CD8-positive, alpha-beta T cell (primary cell): ENCODE measurements at regions of chr13 and their contacts with region 1.

Region 1: DNA sequence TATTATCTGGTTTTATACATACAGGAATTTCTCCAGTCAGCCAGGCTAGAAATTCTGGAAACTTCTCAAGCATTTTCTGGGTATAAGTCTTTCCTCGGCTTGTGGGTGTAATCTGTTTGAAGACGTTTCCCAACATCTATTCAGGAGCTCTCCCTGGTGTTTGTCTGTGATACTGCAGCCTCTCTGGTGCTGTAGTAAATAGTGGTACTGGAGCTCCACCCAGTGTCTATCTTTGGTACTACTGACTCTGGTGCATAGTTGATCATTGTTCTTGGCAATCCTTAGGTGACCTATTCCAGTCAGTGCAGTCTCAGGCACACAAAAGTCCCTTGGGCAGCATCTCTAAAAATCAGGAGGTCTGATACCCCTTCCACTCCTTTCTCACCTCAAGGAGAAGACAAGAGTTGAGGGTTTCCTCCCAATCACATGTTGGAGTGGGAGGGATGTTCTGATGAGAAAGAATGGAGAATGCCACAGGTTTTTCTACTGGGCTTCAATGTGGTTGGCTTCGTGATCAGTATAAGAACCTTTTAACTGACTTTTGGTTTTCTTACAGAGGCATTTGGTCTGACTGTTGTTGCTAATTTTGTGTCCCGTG is 115.5 kb downstream of the CYSLTR2 start:
- DNase-seq: peak; percentile 68 to 89 (median 82)
- ATAC-seq: peak; percentile 100
- H3K4me3 ChIP-seq: no peak overlapping the region
- H3K4me3 Mint-ChIP-seq: no peak overlapping the region
- H3K27ac ChIP-seq: no peak overlapping the region
- H3K27ac Mint-ChIP-seq: no peak overlapping the region
- H3K4me1 ChIP-seq: no peaks in the 10 kb centered on the region
- H3K4me1 Mint-ChIP-seq: peaks cover 3% of the 10 kb centered on the region
- H3K27me3 ChIP-seq: no peaks in the 10 kb centered on the region
- H3K27me3 Mint-ChIP-seq: peaks cover 4% of the 10 kb centered on the region
- CTCF ChIP-seq: peak; percentile 98

Region 2: GRCh38 chr13:46831588-46832194 is 1937.5 kb before region 1 on chr13:
- CTCF ChIA-PET with region 1: interaction called, 5 read pairs
- POLR2A ChIA-PET with region 1: no interaction called
- intact Hi-C with region 1: loop called in 1 of 2 experiments (anchors 5 kb)
- DNase-seq: peak in 4 of 9 experiments; percentile 18 to 52 (median 34)
- ATAC-seq: no peak
- H3K4me3 ChIP-seq: no peak overlapping the region
- H3K4me3 Mint-ChIP-seq: no peak overlapping the region
- H3K27ac ChIP-seq: no peak overlapping the region
- H3K27ac Mint-ChIP-seq: no peak overlapping the region
- H3K4me1 ChIP-seq: no peaks in the 10 kb centered on the region
- H3K4me1 Mint-ChIP-seq: no peaks in the 10 kb centered on the region
- H3K27me3 ChIP-seq: no peaks in the 10 kb centered on the region
- H3K27me3 Mint-ChIP-seq: no peaks in the 10 kb centered on the region
- CTCF ChIP-seq: peak; percentile 75

Region 3: DNA sequence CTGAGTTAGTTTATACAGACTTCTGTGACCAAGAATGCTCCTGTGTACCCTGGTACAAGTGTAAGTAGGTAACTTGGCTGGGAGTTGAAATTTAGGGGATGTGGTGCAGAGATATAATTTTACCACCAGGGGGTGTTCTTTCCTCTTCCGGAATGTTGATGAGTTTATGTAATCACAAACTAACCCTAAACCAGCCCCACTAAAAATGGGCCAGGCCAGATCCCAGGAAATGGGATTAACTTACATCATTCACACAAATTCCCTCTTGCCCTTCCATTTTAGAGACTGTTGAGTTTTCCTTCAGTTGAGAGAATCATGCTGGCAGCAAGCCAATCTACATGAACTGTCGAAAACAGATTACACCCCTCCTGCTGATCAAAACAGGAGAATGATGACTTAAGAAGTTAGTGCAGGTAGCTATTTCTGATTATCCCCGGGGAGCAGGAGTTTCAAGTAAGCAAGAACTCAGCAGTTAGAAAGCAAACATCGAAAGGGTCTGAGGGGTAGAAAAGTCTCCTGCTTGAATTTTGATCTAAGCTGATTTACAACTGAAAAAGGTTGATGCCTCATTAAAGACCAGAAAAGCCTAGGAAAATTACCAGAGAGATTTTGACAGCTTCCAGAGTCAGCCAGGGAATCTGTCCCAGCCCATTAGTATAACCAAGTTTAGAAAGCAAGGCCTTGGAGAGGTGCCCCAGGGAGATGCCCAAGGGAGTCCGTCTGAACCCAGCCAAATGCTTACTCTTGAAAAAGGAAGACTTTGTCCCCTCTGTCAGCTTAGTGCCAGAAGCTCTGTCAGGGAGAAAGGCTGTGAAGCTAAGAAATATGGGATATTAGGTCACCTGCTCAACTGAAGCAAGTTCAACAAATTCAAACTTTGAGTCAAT is 642.0 kb before region 1 on chr13:
- CTCF ChIA-PET with region 1: no interaction called
- POLR2A ChIA-PET with region 1: no interaction called
- intact Hi-C with region 1: loop called in 1 of 2 experiments (anchors 2 kb)
- DNase-seq: peak; percentile 11 to 84 (median 39)
- ATAC-seq: peak; percentile 93
- H3K4me3 ChIP-seq: peak overlapping the region in 1 of 2 experiments; percentile 6
- H3K4me3 Mint-ChIP-seq: peak overlapping the region; percentile 55
- H3K27ac ChIP-seq: peak overlapping the region; percentile 30 to 75
- H3K27ac Mint-ChIP-seq: peak overlapping the region; percentile 94
- H3K4me1 ChIP-seq: peaks cover 13% of the 10 kb centered on the region
- H3K4me1 Mint-ChIP-seq: peaks cover 31% of the 10 kb centered on the region
- H3K27me3 ChIP-seq: no peaks in the 10 kb centered on the region
- H3K27me3 Mint-ChIP-seq: no peaks in the 10 kb centered on the region
- CTCF ChIP-seq: peak; percentile 80

Region 4: GRCh38 chr13:48400850-48401291 is 368.3 kb before region 1 on chr13:
- CTCF ChIA-PET with region 1: interaction called, 3 read pairs
- POLR2A ChIA-PET with region 1: no interaction called
- intact Hi-C with region 1: loop called in 1 of 2 experiments (anchors 2 kb)
- DNase-seq: peak in 2 of 9 experiments; percentile 24 to 48
- ATAC-seq: peak; percentile 38
- H3K4me3 ChIP-seq: no peak overlapping the region
- H3K4me3 Mint-ChIP-seq: no peak overlapping the region
- H3K27ac ChIP-seq: peak overlapping the region in 1 of 2 experiments; percentile 73
- H3K27ac Mint-ChIP-seq: peak overlapping the region; percentile 34
- H3K4me1 ChIP-seq: peaks cover 33% of the 10 kb centered on the region
- H3K4me1 Mint-ChIP-seq: peaks cover 46% of the 10 kb centered on the region
- H3K27me3 ChIP-seq: no peaks in the 10 kb centered on the region
- H3K27me3 Mint-ChIP-seq: no peaks in the 10 kb centered on the region
- CTCF ChIP-seq: no peak

Region 5: GRCh38 chr13:48643159-48643558 is 126.0 kb before region 1 on chr13:
- CTCF ChIA-PET with region 1: no interaction called
- POLR2A ChIA-PET with region 1: no interaction called
- intact Hi-C with region 1: loop called (anchors 1 to 2 kb)
- DNase-seq: peak in 2 of 9 experiments; percentile 12 to 18
- ATAC-seq: no peak
- H3K4me3 ChIP-seq: no peak overlapping the region
- H3K4me3 Mint-ChIP-seq: no peak overlapping the region
- H3K27ac ChIP-seq: no peak overlapping the region
- H3K27ac Mint-ChIP-seq: no peak overlapping the region
- H3K4me1 ChIP-seq: no peaks in the 10 kb centered on the region
- H3K4me1 Mint-ChIP-seq: no peaks in the 10 kb centered on the region
- H3K27me3 ChIP-seq: no peaks in the 10 kb centered on the region
- H3K27me3 Mint-ChIP-seq: no peaks in the 10 kb centered on the region
- CTCF ChIP-seq: peak; percentile 15

Region 6: DNA sequence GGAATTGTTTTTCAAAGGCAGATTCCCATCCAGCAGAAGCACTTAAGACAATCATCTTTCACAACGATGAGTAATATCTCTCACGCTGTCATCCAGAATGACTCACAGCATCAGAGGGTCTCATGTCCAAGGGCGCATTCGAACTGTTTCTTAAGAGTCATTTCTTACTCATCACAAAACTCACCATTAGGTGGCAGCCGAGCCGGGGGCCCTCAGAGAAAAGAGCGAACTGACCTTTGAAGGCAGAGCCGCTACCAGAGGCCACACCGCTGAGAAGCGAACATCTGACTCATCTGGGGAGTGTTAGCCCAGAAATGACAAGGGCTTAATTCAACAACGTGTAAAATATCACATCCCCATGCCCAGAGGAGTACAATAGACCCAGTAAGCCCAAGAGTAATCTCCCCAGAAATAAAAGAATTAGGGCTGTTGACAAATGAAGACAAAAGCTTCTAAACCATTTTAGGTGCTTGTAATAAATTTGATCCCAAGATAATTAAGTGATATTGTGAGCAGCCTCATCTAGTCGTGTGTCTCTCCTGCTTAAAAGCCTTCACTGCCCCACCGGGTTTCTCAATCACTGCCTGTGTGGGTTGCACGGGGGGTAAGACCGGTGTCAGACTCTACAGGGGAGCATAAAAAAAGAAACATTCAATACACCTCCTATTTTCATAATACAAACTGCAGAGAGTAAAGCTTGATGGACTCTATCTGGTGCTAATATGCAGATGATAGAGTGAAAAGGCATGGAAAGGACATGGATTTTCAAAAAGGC is 19.3 kb before region 1 on chr13:
- CTCF ChIA-PET with region 1: interaction called, 13 read pairs
- POLR2A ChIA-PET with region 1: no interaction called
- intact Hi-C with region 1: loop called in 1 of 2 experiments (anchors 1 kb)
- DNase-seq: peak in 8 of 9 experiments; percentile 15 to 63 (median 56)
- ATAC-seq: peak; percentile 89
- H3K4me3 ChIP-seq: no peak overlapping the region
- H3K4me3 Mint-ChIP-seq: no peak overlapping the region
- H3K27ac ChIP-seq: no peak overlapping the region
- H3K27ac Mint-ChIP-seq: no peak overlapping the region
- H3K4me1 ChIP-seq: no peaks in the 10 kb centered on the region
- H3K4me1 Mint-ChIP-seq: peaks cover 7% of the 10 kb centered on the region
- H3K27me3 ChIP-seq: no peaks in the 10 kb centered on the region
- H3K27me3 Mint-ChIP-seq: no peaks in the 10 kb centered on the region
- CTCF ChIP-seq: no peak